ENCODE measurements at regions of chr3 and their contacts with region 1.

Region 1: DNA sequence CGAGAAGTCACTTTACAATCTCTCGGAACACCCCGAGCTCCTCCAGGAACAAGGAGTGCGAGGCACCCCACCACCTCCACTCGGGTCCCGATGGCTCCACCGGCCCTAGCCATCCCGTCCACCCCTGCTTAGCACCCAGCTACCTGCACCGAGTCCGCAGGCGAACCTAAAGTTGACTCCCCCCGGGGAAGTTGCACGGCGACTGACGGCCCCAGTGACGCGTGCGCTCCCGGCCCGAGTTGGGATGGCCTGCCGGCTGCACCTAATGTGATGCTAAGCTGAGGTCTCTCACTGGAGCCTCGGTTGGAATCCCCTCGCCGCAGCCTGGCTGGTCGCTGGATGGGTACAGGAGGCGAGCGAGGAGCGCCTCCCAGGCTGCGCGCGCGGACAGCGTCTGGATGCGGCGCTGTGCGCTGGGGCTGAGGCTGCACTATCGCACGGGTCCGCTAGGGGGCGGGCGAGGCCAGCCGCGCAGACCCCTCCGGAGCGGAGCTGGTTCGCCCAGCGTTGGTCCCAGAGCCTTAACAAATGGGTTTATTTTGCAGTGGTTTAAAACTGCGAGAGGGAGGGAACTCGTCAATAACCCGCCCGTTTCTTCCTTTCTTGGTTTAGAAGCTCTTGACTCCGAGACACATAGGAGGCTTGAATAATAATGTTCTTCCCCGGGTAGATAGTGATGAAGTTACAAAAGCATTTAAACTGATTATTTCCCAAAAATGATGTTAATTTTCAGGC is at the start of gene OXTR:
- DNase-seq: peak; percentile 66 to 78
- ATAC-seq: peak; percentile 93 to 99
- H3K4me3 ChIP-seq: peak within 1 kb of the TSS; percentile 52
- H3K27ac ChIP-seq: peak within 1 kb of the TSS; percentile 68 to 83
- H3K4me1 ChIP-seq: no peaks in the 10 kb centered on the region
- CTCF ChIP-seq: peak; percentile 98
- EP300 ChIP-seq: no peak
- POLR2A ChIP-seq: no peak
- RAD21 ChIP-seq: peak; percentile 90 to 98
- polyA plus RNA-seq, gene OXTR: 2.1 TPM in 2 replicates

Region 2: GRCh38 chr3:8681349-8681748 is 87.9 kb before region 1 on chr3:
- CTCF ChIA-PET with region 1: interaction called, 10 read pairs
- POLR2A ChIA-PET with region 1: no interaction called
- DNase-seq: no peak
- ATAC-seq: no peak
- H3K4me3 ChIP-seq: no peak overlapping the region
- H3K27ac ChIP-seq: peak overlapping the region; percentile 45 to 82; a peak in 4 of 6 replicates
- H3K4me1 ChIP-seq: peaks cover 31% of the 10 kb centered on the region
- CTCF ChIP-seq: no peak
- EP300 ChIP-seq: no peak
- POLR2A ChIP-seq: no peak
- RAD21 ChIP-seq: no peak

Region 3: GRCh38 chr3:8784676-8785435 is 15.6 kb after region 1 on chr3:
- CTCF ChIA-PET with region 1: interaction called, 39 read pairs
- POLR2A ChIA-PET with region 1: no interaction called
- DNase-seq: no peak
- ATAC-seq: no peak
- H3K4me3 ChIP-seq: no peak overlapping the region
- H3K27ac ChIP-seq: no peak overlapping the region
- H3K4me1 ChIP-seq: no peaks in the 10 kb centered on the region
- CTCF ChIP-seq: no peak
- EP300 ChIP-seq: no peak
- POLR2A ChIP-seq: no peak
- RAD21 ChIP-seq: no peak

Region 4: GRCh38 chr3:8822141-8822540 is 52.9 kb after region 1 on chr3:
- CTCF ChIA-PET with region 1: interaction called, 13 read pairs
- POLR2A ChIA-PET with region 1: no interaction called
- DNase-seq: no peak
- ATAC-seq: no peak
- H3K4me3 ChIP-seq: no peak overlapping the region
- H3K27ac ChIP-seq: no peak overlapping the region
- H3K4me1 ChIP-seq: no peaks in the 10 kb centered on the region
- CTCF ChIP-seq: no peak
- EP300 ChIP-seq: no peak
- POLR2A ChIP-seq: no peak
- RAD21 ChIP-seq: no peak

Region 5: DNA sequence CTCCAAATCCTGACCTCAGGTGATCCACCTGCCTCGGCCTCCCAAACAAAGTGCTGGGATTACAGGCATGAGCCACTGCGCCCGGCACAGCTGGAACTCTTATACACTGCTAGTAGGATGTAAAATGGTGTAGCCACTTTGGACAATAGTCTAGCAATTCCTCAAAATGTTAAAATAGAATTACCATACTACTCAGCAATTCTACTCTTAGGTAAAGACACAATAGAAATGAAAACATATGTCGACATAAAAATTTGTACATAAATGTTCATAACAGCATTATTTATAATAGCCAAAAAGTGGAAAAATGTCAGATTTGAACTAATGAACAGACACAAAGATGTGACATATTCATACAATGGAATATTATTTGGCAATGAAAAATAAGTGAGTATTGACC is 160.6 kb after region 1 on chr3:
- CTCF ChIA-PET with region 1: interaction called, 29 read pairs
- POLR2A ChIA-PET with region 1: no interaction called
- DNase-seq: no peak
- ATAC-seq: no peak
- H3K4me3 ChIP-seq: no peak overlapping the region
- H3K27ac ChIP-seq: no peak overlapping the region
- H3K4me1 ChIP-seq: 0 out of 3 replicates have a peak, but pooled peaks cover 6% of the 10 kb centered on the region
- CTCF ChIP-seq: no peak
- EP300 ChIP-seq: no peak
- POLR2A ChIP-seq: no peak
- RAD21 ChIP-seq: no peak

Region 6: DNA sequence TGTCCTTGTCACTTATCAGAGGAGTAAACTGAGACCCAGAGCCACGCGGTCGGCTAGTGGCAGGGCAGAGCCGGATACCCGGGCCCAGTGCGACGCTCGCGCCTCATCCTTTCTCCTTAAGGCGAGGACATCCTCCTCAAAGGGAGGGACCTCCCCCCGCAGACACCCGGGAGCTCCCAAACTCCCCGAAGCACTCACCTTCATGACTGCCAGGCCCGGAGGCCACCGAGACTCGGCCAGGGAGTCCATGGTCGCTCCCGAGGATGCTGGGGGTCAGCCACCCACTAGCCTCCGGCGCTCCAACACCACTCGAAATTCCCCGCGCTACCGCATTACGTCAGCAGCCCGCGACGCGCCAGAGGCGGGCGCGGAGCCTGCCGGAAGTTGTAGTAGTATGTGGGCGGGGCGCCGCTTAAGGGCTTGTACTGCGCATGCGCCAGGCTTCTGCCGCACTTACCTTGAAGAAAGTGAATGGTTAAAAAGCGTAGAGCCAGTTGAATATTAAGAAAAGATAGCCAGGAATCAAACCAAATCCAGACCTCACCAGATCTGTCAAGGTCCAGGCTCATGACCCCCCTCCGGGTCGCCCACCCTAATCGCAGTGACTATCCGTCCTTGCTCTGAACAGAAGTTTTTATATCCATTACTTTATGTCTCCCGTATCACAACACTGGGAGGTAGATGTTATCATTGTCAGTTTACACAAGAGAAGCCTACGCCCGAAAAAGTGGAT is 194.0 kb after region 1 on chr3 and contains the start of gene RAD18:
- CTCF ChIA-PET with region 1: interaction called, 77 read pairs
- POLR2A ChIA-PET with region 1: no interaction called
- DNase-seq: peak; percentile 80 to 92
- ATAC-seq: peak; percentile 89 to 93
- H3K4me3 ChIP-seq: peak within 1 kb of the TSS; percentile 66
- H3K27ac ChIP-seq: peak within 1 kb of the TSS; percentile 65 to 86
- H3K4me1 ChIP-seq: peaks cover 30% of the 10 kb centered on the region
- CTCF ChIP-seq: no peak
- EP300 ChIP-seq: no peak
- POLR2A ChIP-seq: peak; percentile 43
- RAD21 ChIP-seq: no peak
- polyA plus RNA-seq, gene RAD18: 16.3 and 23.2 TPM in 2 replicates